ENCODE measurements at regions of chr7 and their contacts with region 1.

Region 1: GRCh38 chr7:876167-876967 is at the start of gene GET4:
- DNase-seq: peak; percentile 93
- H3K4me3 ChIP-seq: peak within 1 kb of the TSS; percentile 79 to 94 (median 94)
- H3K27ac ChIP-seq: peak within 1 kb of the TSS; percentile 69
- H3K4me1 ChIP-seq: peaks cover 6% of the 10 kb centered on the region
- H3K27me3 ChIP-seq: no peaks in the 10 kb centered on the region
- CTCF ChIP-seq: no peak
- total RNA-seq, gene GET4: 26.0 to 40.8 TPM

Region 2: GRCh38 chr7:322111-322671 is 554.2 kb before region 1 on chr7:
- CTCF ChIA-PET with region 1: no interaction called
- dilution Hi-C with region 1: no loop called
- in situ Hi-C with region 1: loop called in 1 of 2 experiments (anchors 10 kb)
- intact Hi-C with region 1: no loop called
- DNase-seq: peak; percentile 48
- H3K4me3 ChIP-seq: no peak overlapping the region
- H3K27ac ChIP-seq: no peak overlapping the region
- H3K4me1 ChIP-seq: no peaks in the 10 kb centered on the region
- H3K27me3 ChIP-seq: no peaks in the 10 kb centered on the region
- CTCF ChIP-seq: peak; percentile 64 to 78

Region 3: DNA sequence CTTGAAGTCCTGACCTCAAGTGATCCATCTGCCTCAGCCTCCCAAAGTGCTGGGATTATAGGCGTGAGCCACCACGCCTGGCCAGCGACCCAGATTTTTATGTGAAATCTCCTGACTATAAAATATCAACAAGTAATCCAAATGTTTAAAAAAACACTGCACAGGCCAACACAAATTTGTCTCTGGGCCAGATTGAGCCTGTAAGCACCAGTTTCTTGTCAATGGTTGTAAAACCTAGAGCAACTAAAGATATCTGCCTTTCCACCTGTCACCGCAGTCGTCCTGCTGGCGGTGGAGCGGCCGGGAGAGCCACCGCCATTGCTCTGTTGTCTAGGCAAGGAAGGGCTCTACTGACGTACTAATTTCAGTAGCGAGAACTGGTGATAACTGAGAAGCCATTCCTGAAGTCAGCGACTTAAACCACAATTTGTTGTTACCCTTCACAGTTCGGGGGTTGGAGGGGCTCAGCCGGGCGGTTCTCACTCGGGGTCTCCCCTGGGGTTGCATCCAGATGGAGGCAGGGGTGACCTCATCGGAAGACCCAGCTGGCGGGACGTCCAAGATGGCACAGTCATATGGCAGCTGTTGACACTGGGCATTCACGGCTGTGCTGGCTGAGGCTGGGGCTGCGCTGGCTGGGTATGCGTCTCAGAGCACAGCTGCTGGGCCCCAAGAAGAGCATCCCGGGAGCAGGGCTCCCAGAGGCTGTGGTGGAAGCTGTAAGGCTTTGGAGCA is 301.5 kb before region 1 on chr7:
- CTCF ChIA-PET with region 1: no interaction called
- dilution Hi-C with region 1: no loop called
- in situ Hi-C with region 1: no loop called
- intact Hi-C with region 1: no loop called
- DNase-seq: no peak
- H3K4me3 ChIP-seq: no peak overlapping the region
- H3K27ac ChIP-seq: no peak overlapping the region
- H3K4me1 ChIP-seq: no peaks in the 10 kb centered on the region
- H3K27me3 ChIP-seq: no peaks in the 10 kb centered on the region
- CTCF ChIP-seq: no peak

Region 4: GRCh38 chr7:768881-769504 is 107.4 kb before region 1 on chr7:
- CTCF ChIA-PET with region 1: no interaction called
- dilution Hi-C with region 1: no loop called
- in situ Hi-C with region 1: no loop called
- intact Hi-C with region 1: no loop called
- DNase-seq: no peak
- H3K4me3 ChIP-seq: no peak overlapping the region
- H3K27ac ChIP-seq: no peak overlapping the region
- H3K4me1 ChIP-seq: peaks cover 5% of the 10 kb centered on the region
- H3K27me3 ChIP-seq: no peaks in the 10 kb centered on the region
- CTCF ChIP-seq: no peak

Region 5: GRCh38 chr7:786472-787255 is 89.7 kb before region 1 on chr7:
- CTCF ChIA-PET with region 1: no interaction called
- dilution Hi-C with region 1: no loop called
- in situ Hi-C with region 1: loop called in 1 of 2 experiments (anchors 5 kb)
- intact Hi-C with region 1: loop called (anchors 1 kb)
- DNase-seq: peak; percentile 34
- H3K4me3 ChIP-seq: no peak overlapping the region
- H3K27ac ChIP-seq: no peak overlapping the region
- H3K4me1 ChIP-seq: no peaks in the 10 kb centered on the region
- H3K27me3 ChIP-seq: no peaks in the 10 kb centered on the region
- CTCF ChIP-seq: peak; percentile 80 to 97

Region 6: GRCh38 chr7:821688-822087 is 54.7 kb before region 1 on chr7:
- CTCF ChIA-PET with region 1: interaction called, 8 read pairs
- dilution Hi-C with region 1: no loop called
- in situ Hi-C with region 1: no loop called
- intact Hi-C with region 1: loop called (anchors 1 kb)
- DNase-seq: peak; percentile 40
- H3K4me3 ChIP-seq: no peak overlapping the region
- H3K27ac ChIP-seq: no peak overlapping the region
- H3K4me1 ChIP-seq: peaks cover 21% of the 10 kb centered on the region
- H3K27me3 ChIP-seq: no peaks in the 10 kb centered on the region
- CTCF ChIP-seq: peak in 1 of 2 donors; percentile 38

Region 7: DNA sequence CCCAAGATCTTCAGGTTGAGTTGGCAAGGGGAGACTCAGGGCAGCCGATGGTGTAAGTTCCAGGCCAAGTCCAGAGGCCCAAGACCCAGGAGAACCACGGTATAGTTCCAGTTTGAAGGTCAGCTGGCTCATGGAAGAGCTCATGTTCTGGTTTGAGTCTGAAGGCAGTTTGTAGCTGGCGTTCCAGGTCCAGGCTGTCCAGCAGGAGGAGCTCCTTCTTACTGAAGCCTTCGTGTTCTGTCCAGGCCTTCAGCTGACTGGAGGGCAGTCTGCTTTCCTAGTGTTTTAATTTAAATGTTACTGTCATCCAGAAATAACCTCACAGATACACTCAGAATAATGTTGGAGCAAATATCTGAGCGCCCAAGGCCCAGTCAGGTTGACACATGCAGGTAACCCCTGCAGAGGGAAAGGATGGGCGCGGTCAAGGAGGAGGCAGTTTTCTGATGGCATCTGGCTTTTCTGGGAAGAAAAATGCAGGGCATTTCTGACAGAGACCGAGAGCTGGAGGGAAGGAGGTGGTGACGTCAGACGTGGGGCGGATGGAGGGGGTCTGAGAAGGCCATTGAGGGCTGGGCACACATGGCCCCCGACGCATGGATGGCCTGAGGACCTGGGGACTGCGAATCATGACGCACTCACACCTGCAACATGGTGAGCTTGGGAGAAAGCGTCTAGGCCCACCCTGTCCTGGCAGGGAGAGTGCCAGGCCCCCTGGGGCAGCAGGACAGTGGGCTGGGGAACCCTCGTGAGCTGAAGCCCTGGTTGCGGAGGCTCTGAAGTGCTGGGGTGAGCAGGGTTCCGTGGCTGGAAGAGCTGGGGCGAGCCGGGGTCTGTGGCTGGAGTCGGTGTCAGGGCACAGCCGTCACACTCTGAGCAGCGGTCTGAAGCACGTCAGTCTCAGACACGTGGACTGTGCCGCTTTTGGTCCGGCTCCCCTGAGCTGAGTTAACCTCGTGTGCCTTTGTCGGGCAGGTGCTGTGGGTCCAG is 39.7 kb before region 1 on chr7:
- CTCF ChIA-PET with region 1: no interaction called
- dilution Hi-C with region 1: no loop called
- in situ Hi-C with region 1: no loop called
- intact Hi-C with region 1: loop called (anchors 1 kb)
- DNase-seq: peak; percentile 35
- H3K4me3 ChIP-seq: no peak overlapping the region
- H3K27ac ChIP-seq: peak overlapping the region; percentile 66
- H3K4me1 ChIP-seq: peaks cover 41% of the 10 kb centered on the region
- H3K27me3 ChIP-seq: no peaks in the 10 kb centered on the region
- CTCF ChIP-seq: peak; percentile 47 to 60

Region 8: GRCh38 chr7:936131-937054 is 60.0 kb after region 1 on chr7:
- CTCF ChIA-PET with region 1: no interaction called
- dilution Hi-C with region 1: no loop called
- in situ Hi-C with region 1: no loop called
- intact Hi-C with region 1: no loop called
- DNase-seq: no peak
- H3K4me3 ChIP-seq: no peak overlapping the region
- H3K27ac ChIP-seq: no peak overlapping the region
- H3K4me1 ChIP-seq: no peaks in the 10 kb centered on the region
- H3K27me3 ChIP-seq: no peaks in the 10 kb centered on the region
- CTCF ChIP-seq: no peak